PC-9 (cell line): ENCODE measurements at regions of chr2 and their contacts with region 1.

Region 1: GRCh38 chr2:227766373-227766883 is 20.7 kb downstream of the SCYGR8 start:
- DNase-seq: peak; percentile 57 to 79
- H3K4me3 ChIP-seq: no peak overlapping the region
- H3K27ac ChIP-seq: no peak overlapping the region
- H3K4me1 ChIP-seq: peaks cover 12% of the 10 kb centered on the region
- H3K27me3 ChIP-seq: no peaks in the 10 kb centered on the region
- CTCF ChIP-seq: peak; percentile 93

Region 2: GRCh38 chr2:227132986-227133385 is 633.4 kb before region 1 on chr2:
- CTCF ChIA-PET with region 1: no interaction called
- POLR2A ChIA-PET with region 1: no interaction called
- intact Hi-C with region 1: loop called (anchors 1 kb)
- DNase-seq: no peak
- H3K4me3 ChIP-seq: no peak overlapping the region
- H3K27ac ChIP-seq: no peak overlapping the region
- H3K4me1 ChIP-seq: no peaks in the 10 kb centered on the region
- H3K27me3 ChIP-seq: no peaks in the 10 kb centered on the region
- CTCF ChIP-seq: no peak

Region 3: DNA sequence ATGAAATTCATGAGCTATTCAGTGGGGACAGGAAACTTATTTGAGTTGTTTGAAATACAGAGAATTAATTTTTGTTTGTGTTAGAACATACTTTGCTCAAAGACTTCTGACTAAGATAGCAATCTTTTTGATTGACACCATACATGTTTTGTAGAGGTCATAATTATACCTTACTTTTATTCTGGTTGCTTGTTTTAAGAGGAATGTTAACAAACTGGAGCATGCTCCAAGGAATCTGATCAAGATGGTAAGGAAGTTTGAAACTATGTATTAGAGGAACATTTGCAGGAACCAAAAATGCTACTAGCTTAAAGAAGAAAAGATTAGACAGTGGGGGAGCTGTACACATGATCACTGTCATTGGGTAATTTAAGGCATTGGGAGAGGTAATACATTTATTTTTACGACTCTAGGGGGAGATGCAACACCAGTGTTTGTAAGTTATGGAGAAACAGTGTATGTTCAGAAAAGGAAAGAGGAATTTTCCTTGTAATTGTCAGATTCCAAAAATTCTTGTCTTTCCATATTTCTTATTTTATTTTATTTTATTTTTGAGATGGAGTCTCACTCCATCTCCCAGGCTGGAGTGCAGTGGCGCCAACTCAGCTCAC is 286.5 kb before region 1 on chr2:
- CTCF ChIA-PET with region 1: interaction called, 9 read pairs
- POLR2A ChIA-PET with region 1: no interaction called
- intact Hi-C with region 1: loop called (anchors 5 kb)
- DNase-seq: no peak
- H3K4me3 ChIP-seq: no peak overlapping the region
- H3K27ac ChIP-seq: peak overlapping the region; percentile 45
- H3K4me1 ChIP-seq: peaks cover 60% of the 10 kb centered on the region
- H3K27me3 ChIP-seq: no peaks in the 10 kb centered on the region
- CTCF ChIP-seq: 0 out of 2 replicates have a peak, but pooled peaks have one; percentile 26

Region 4: GRCh38 chr2:227578651-227579050 is 187.8 kb before region 1 on chr2:
- CTCF ChIA-PET with region 1: no interaction called
- POLR2A ChIA-PET with region 1: no interaction called
- intact Hi-C with region 1: loop called (anchors 10 kb)
- DNase-seq: no peak
- H3K4me3 ChIP-seq: no peak overlapping the region
- H3K27ac ChIP-seq: no peak overlapping the region
- H3K4me1 ChIP-seq: no peaks in the 10 kb centered on the region
- H3K27me3 ChIP-seq: no peaks in the 10 kb centered on the region
- CTCF ChIP-seq: no peak

Region 5: GRCh38 chr2:227703280-227703732 is 63.1 kb before region 1 on chr2:
- CTCF ChIA-PET with region 1: interaction called, 6 read pairs
- POLR2A ChIA-PET with region 1: no interaction called
- intact Hi-C with region 1: loop called (anchors 2 kb)
- DNase-seq: peak; percentile 75 to 94
- H3K4me3 ChIP-seq: peak overlapping the region; percentile 41
- H3K27ac ChIP-seq: peak overlapping the region; percentile 92
- H3K4me1 ChIP-seq: peaks cover 37% of the 10 kb centered on the region
- H3K27me3 ChIP-seq: no peaks in the 10 kb centered on the region
- CTCF ChIP-seq: no peak

Region 6: DNA sequence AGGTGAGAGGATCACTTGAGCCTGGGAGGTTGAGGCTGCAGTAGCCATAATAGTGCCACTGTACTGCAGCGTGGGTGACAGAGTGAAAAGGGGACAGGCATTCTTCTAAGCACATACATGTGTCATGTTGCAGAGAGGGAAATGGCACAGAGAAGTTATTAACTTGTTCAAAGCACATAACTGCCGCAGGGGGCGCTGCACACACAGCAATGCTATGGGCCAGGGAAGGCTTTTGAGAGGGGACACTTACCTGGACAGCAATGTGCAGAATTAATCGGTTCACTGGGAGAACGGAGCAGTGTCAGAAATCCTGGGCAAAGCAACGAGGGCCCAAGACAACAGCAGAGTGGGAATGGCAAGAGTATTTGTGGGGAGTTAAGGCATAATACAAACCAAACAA is 18.3 kb before region 1 on chr2:
- CTCF ChIA-PET with region 1: no interaction called
- POLR2A ChIA-PET with region 1: no interaction called
- intact Hi-C with region 1: no loop called
- DNase-seq: no peak
- H3K4me3 ChIP-seq: no peak overlapping the region
- H3K27ac ChIP-seq: no peak overlapping the region
- H3K4me1 ChIP-seq: no peaks in the 10 kb centered on the region
- H3K27me3 ChIP-seq: no peaks in the 10 kb centered on the region
- CTCF ChIP-seq: no peak

Region 7: GRCh38 chr2:227862227-227862740 is 95.9 kb after region 1 on chr2:
- CTCF ChIA-PET with region 1: interaction called, 6 read pairs
- POLR2A ChIA-PET with region 1: no interaction called
- intact Hi-C with region 1: loop called (anchors 1 kb)
- DNase-seq: no peak
- H3K4me3 ChIP-seq: no peak overlapping the region
- H3K27ac ChIP-seq: peak overlapping the region; percentile 93
- H3K4me1 ChIP-seq: peaks cover 29% of the 10 kb centered on the region
- H3K27me3 ChIP-seq: no peaks in the 10 kb centered on the region
- CTCF ChIP-seq: peak; percentile 75

Region 8: DNA sequence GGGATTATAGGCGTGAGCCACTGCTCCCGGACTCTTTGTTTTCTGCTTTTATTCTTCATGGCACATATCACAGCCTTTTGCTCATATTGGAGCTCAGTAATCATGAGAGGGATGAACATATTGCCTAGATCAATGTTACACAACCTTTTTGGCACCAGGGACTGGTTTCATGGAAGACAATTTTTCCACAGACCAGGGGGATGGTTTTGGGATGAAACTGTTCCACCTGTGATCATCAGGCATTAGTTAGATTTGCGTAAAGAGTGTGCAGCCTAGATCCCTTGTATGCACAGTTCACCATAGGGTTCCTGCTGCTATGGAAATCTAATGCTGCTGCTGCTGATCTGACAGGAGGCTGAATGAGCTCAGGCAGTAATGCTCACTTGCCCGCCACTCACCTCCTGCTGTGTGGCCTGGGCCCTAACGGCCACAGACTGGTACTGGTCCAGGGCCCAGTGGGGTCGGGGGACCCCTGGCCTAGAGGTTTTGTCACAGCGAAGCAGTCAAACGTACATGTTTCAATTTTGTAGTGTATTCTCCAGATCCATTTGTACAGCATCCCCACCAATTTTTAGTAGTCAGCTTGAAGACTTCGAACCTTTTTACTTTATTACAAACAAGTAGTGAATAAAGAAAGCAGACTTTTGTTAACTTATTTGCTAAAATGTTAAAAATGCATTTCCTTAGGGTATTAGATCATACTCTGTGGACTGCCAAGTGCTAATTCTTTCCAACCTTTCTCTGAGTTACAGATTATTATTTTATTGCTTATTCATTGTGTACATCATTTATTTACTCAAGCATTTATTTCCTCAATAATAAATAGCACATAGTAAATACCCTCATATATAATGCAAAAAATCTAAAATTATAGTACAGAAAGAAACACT is 111.2 kb after region 1 on chr2:
- CTCF ChIA-PET with region 1: no interaction called
- POLR2A ChIA-PET with region 1: no interaction called
- intact Hi-C with region 1: no loop called
- DNase-seq: no peak
- H3K4me3 ChIP-seq: no peak overlapping the region
- H3K27ac ChIP-seq: no peak overlapping the region
- H3K4me1 ChIP-seq: no peaks in the 10 kb centered on the region
- H3K27me3 ChIP-seq: no peaks in the 10 kb centered on the region
- CTCF ChIP-seq: no peak